ENCODE measurements at regions of chr18 and their contacts with region 1.

Region 1: GRCh38 chr18:62771494-62772270 is 56.3 kb downstream of the PHLPP1 start:
- DNase-seq: no peak
- ATAC-seq: no peak
- H3K4me3 ChIP-seq: no peak overlapping the region
- H3K27ac ChIP-seq: peak overlapping the region; percentile 25
- H3K4me1 ChIP-seq: peaks cover 78% of the 10 kb centered on the region
- H3K27me3 ChIP-seq: no peaks in the 10 kb centered on the region
- CTCF ChIP-seq: no peak
- EP300 ChIP-seq: no peak
- POLR2A ChIP-seq: no peak
- RAD21 ChIP-seq: no peak

Region 2: DNA sequence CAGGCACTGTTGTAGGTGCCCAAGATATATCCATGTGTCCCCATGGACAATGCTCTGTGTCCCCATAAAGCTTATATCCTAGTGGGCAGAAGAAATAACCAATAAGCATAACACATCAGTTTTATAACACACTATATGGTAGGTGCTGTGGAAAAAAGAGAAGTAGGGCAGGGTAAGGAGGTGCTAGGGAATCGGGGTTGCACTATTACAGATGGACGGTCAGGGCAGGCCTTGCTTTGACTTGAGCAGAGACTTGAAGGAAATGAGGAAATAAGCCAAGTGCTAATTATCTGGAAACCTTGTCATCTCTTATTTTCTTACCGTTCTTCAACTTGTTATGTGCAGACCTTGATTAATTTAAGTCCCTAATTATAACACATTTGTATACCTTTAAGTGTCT is 25.6 kb after region 1 on chr18:
- CTCF ChIA-PET with region 1: no interaction called
- POLR2A ChIA-PET with region 1: interaction called, 12 read pairs
- in situ Hi-C with region 1: no loop called
- intact Hi-C with region 1: no loop called
- DNase-seq: no peak
- ATAC-seq: no peak
- H3K4me3 ChIP-seq: no peak overlapping the region; a peak in 1 of 6 replicates
- H3K27ac ChIP-seq: peak overlapping the region; percentile 70
- H3K4me1 ChIP-seq: peaks cover 99% of the 10 kb centered on the region
- H3K27me3 ChIP-seq: no peaks in the 10 kb centered on the region
- CTCF ChIP-seq: no peak
- EP300 ChIP-seq: no peak
- POLR2A ChIP-seq: no peak
- RAD21 ChIP-seq: no peak

Measured in HepG2 (cell line).